Gastrocnemius medialis (tissue), 4 donors: ENCODE measurements at regions of chr13 and their contacts with region 1.

Region 1: DNA sequence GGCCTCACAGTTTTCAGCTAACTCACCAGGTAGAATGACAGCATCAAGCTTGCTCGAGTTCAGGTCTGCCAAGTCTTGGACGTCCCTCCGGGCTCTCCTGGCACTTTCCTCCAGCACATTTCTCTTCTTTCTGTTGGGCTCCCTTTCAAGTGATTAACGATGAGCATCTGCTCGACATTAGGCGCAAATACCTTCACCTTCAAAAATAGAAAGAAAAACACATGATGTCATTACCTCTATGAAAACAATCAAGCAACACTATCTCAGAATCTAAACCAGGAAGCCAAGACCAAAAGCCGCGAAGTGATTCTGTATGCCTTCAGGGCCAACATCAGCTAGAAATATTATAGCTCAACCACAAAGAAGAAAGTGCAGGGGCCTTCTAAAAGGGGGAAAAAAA is 15.4 kb upstream of the CLN5 start:
- DNase-seq: no peak
- ATAC-seq: no peak
- H3K4me3 ChIP-seq: no peak overlapping the region
- H3K27ac ChIP-seq: no peak overlapping the region
- H3K4me1 ChIP-seq: peaks cover 4 to 8% of the 10 kb centered on the region in 2 donors
- H3K27me3 ChIP-seq: no peaks in the 10 kb centered on the region
- CTCF ChIP-seq: no peak
- POLR2A ChIP-seq: no peak

Region 2: GRCh38 chr13:75870397-75870903 is 1106.0 kb before region 1 on chr13:
- in situ Hi-C with region 1: no loop called
- intact Hi-C with region 1: loop called (anchors 5 kb)
- DNase-seq: no peak
- ATAC-seq: peak in 1 of 2 donors; percentile 25
- H3K4me3 ChIP-seq: peak overlapping the region; percentile 46 to 70 (median 50)
- H3K27ac ChIP-seq: no peak overlapping the region
- H3K4me1 ChIP-seq: no peaks in the 10 kb centered on the region
- H3K27me3 ChIP-seq: no peaks in the 10 kb centered on the region
- CTCF ChIP-seq: peak; percentile 27 to 77 (median 59)
- POLR2A ChIP-seq: no peak

Region 3: DNA sequence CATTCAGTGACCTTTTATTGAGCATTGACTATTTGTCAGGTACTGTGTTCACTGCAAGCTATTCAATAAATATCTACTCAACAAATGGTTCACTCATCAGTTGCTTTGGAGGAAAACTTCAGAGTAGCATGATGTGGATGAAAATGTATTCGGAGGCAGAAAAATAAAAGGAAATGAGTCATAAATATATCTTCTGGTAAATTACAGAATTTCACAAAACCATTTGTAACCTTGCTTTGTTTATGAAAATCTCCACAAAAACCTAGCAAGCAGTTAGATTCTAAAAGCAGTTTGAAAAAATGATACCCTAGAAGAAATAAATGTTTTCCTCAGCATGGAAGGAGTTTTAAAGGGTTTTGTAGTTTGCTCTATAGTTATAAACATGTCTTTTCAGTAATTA is 940.8 kb before region 1 on chr13:
- in situ Hi-C with region 1: no loop called
- intact Hi-C with region 1: no loop called
- DNase-seq: no peak
- ATAC-seq: no peak
- H3K4me3 ChIP-seq: no peak overlapping the region
- H3K27ac ChIP-seq: no peak overlapping the region
- H3K4me1 ChIP-seq: no peaks in the 10 kb centered on the region
- H3K27me3 ChIP-seq: no peaks in the 10 kb centered on the region
- CTCF ChIP-seq: no peak
- POLR2A ChIP-seq: no peak

Region 4: DNA sequence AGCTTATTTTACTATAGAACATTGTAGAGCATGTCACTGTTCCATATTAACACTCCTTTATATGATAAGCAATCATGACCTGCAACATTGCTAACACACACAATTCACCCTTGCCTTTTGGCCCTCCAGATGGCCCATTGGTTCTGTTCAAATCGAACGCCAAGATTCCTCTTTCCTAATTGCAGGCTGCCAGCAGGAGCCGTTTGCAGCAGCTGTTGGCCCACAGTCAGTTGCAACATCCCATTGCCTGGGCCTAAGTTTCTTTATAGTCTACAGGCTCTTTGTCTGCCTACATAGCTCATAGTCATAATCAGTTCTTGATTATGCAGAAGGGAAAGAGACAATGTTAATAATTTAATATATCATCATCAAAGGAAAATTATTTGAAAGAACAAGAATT is 127.9 kb before region 1 on chr13:
- in situ Hi-C with region 1: no loop called
- intact Hi-C with region 1: no loop called
- DNase-seq: peak; percentile 28 to 29
- ATAC-seq: peak in 1 of 2 donors; percentile 55
- H3K4me3 ChIP-seq: no peak overlapping the region
- H3K27ac ChIP-seq: no peak overlapping the region
- H3K4me1 ChIP-seq: no peaks in the 10 kb centered on the region
- H3K27me3 ChIP-seq: no peaks in the 10 kb centered on the region
- CTCF ChIP-seq: no peak
- POLR2A ChIP-seq: no peak